PC-3 (cell line): ENCODE measurements at regions of chr6 and their contacts with region 1.

Region 1: GRCh38 chr6:98845211-98846020 is 11.0 kb downstream of the POU3F2 start:
- DNase-seq: peak; percentile 74
- ATAC-seq: peak; percentile 79
- H3K4me3 ChIP-seq: no peak overlapping the region
- H3K27ac ChIP-seq: no peak overlapping the region
- H3K4me1 ChIP-seq: no peaks in the 10 kb centered on the region
- H3K27me3 ChIP-seq: peaks cover 53% of the 10 kb centered on the region
- CTCF ChIP-seq: peak; percentile 81

Region 2: DNA sequence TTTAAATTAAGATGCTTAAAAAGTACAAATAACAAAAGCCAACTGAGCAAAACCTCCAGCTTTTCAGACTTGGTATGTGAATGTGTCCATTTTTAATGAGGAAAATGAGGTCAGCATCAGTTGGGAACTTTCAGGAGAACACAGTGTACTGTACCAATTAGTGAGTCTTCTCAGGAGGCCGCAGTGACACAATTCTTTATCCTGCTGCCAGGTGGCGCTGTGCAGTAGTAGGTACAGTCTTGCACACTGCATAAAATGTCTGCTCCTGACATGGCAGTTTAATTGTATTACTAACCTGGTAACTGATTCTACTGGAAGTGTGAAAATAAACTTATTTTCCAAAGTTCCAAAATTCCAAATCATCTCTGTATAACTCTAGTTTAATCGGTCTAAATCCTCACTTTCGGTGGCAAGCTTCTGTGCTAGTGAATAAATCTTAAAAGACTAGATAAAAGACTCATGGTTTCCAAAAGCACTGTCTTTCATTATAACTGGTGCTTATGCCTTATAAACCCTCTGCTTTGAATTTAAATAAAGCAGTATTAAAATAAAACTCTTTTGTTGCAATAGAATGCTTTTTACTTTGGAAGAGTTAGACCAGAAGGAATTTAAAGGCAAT is 1347.6 kb before region 1 on chr6:
- CTCF ChIA-PET with region 1: interaction called, 4 read pairs
- POLR2A ChIA-PET with region 1: no interaction called
- intact Hi-C with region 1: loop called (anchors 5 kb)
- DNase-seq: peak; percentile 68
- ATAC-seq: peak; percentile 84
- H3K4me3 ChIP-seq: no peak overlapping the region
- H3K27ac ChIP-seq: no peak overlapping the region
- H3K4me1 ChIP-seq: no peaks in the 10 kb centered on the region
- H3K27me3 ChIP-seq: peaks cover 8% of the 10 kb centered on the region; the same call in 1 of the 2 replicates
- CTCF ChIP-seq: peak; percentile 80

Region 3: GRCh38 chr6:98054453-98054852 is 791.0 kb before region 1 on chr6:
- CTCF ChIA-PET with region 1: no interaction called
- POLR2A ChIA-PET with region 1: no interaction called
- intact Hi-C with region 1: loop called (anchors 5 kb)
- DNase-seq: peak; percentile 29
- ATAC-seq: no peak
- H3K4me3 ChIP-seq: no peak overlapping the region
- H3K27ac ChIP-seq: no peak overlapping the region
- H3K4me1 ChIP-seq: no peaks in the 10 kb centered on the region
- H3K27me3 ChIP-seq: peaks cover 49% of the 10 kb centered on the region
- CTCF ChIP-seq: peak; percentile 55

Region 4: GRCh38 chr6:98747273-98747672 is 98.1 kb before region 1 on chr6:
- CTCF ChIA-PET with region 1: no interaction called
- POLR2A ChIA-PET with region 1: no interaction called
- intact Hi-C with region 1: no loop called
- DNase-seq: no peak
- ATAC-seq: no peak
- H3K4me3 ChIP-seq: no peak overlapping the region
- H3K27ac ChIP-seq: no peak overlapping the region
- H3K4me1 ChIP-seq: 0 out of 2 replicates have a peak, but pooled peaks cover 3% of the 10 kb centered on the region
- H3K27me3 ChIP-seq: no peaks in the 10 kb centered on the region
- CTCF ChIP-seq: no peak

Region 5: DNA sequence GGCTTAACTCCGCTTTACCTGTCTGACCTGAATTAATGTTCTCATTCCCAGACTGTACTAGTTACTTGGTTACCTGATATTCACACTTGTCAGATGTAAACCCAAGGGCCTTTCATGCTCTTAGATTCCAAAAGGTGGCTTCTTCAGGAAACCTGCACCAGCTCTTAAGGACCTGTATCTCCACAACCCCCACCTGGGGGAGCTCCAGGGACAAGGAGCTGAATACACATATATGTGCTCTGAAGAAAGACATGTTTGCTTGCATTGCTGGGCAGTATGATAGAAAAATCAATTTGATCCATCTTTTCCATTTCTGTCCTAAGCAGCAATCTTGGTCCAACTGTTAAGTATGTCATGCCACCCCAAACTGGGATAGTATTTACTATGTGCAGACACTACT is 75.9 kb before region 1 on chr6:
- CTCF ChIA-PET with region 1: no interaction called
- POLR2A ChIA-PET with region 1: no interaction called
- intact Hi-C with region 1: loop called (anchors 2 kb)
- DNase-seq: peak; percentile 47
- ATAC-seq: peak; percentile 62
- H3K4me3 ChIP-seq: no peak overlapping the region
- H3K27ac ChIP-seq: no peak overlapping the region
- H3K4me1 ChIP-seq: no peaks in the 10 kb centered on the region
- H3K27me3 ChIP-seq: peaks cover 13% of the 10 kb centered on the region; the same call in 1 of the 2 replicates
- CTCF ChIP-seq: peak; percentile 51; the same call in 1 of the 2 replicates

Region 6: DNA sequence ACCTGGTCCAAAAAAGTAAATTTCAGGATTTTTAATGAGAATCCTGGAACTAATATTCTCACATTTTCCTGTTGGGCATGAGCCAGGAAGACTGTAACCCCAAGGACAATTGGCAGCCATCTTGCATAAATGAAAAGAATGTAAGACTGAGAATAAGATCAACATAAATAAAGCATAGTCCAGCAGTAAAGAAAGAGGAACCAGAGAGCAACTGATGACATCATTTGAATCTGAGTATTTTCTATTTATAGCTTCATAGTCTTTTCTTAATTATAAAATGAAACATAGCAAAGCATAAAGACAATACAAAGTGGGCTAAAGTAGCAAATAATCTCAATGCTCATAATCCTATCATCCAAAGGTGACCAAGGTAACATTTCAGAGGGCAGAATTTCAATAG is 128.9 kb after region 1 on chr6:
- CTCF ChIA-PET with region 1: no interaction called
- POLR2A ChIA-PET with region 1: no interaction called
- intact Hi-C with region 1: no loop called
- DNase-seq: no peak
- ATAC-seq: no peak
- H3K4me3 ChIP-seq: no peak overlapping the region
- H3K27ac ChIP-seq: no peak overlapping the region
- H3K4me1 ChIP-seq: no peaks in the 10 kb centered on the region
- H3K27me3 ChIP-seq: no peaks in the 10 kb centered on the region
- CTCF ChIP-seq: no peak

Region 7: DNA sequence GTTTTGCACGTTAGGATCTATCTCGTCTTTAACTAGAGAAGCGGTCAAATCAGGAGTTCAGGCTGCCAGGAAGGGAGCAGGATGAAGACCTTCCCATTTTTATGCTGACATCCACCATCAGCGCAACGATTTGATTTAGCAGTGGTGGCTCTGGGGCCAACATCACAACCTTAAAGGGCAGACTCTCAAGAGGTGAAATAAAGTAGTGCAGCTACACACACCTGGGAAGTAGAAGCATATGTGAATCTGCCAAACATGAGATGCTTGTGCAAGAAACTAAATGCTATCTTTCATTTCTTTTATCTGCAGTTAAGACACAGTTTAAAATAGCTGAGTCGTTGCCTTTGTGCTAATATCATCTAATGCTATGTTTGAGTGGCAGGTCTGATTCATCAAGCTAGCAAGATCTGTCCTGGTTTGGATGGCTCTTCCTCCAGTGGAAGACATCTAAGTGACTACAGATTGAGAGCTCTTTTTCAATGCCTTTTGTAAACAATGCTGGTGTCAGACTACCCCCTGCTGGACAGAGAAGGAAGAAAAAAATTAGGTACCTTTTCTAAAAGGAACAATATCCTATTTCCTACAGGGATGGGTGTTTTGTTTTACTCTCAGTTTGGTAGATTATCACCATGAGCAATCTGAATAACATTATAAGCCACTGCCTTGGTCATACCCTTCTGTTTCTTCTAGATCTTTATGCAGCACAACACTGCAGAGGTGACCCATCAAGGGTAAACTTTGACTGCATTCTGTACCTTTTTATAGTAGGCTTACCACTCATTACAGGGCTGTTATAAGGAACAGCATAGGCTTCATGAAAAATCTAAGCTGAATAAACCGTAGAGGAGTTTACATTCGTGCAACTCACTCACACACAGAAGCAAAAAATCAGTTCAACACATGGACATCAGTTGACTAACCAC is 274.0 kb after region 1 on chr6:
- CTCF ChIA-PET with region 1: no interaction called
- POLR2A ChIA-PET with region 1: no interaction called
- intact Hi-C with region 1: loop called (anchors 1 kb)
- DNase-seq: peak; percentile 57
- ATAC-seq: peak; percentile 65
- H3K4me3 ChIP-seq: no peak overlapping the region
- H3K27ac ChIP-seq: no peak overlapping the region
- H3K4me1 ChIP-seq: no peaks in the 10 kb centered on the region
- H3K27me3 ChIP-seq: peaks cover 19% of the 10 kb centered on the region
- CTCF ChIP-seq: peak; percentile 70

Region 8: DNA sequence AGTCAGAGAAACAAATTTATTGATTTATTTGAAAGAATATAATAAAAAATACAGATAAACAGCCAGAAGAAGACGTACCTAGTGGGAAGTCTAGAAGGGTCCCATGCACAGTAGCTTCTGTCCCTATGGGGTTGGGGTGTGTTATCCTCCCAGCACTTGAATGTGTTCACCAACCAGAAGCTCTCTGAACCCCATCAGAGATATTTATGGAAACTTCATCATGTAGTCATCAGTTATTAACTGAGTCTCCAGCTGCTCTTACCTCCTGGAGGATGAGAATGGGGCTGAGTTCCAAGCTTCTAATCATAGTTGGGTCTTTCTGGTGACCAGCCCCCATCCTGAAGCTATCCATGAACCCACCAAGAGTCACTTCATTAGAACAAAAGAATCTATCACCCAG is 685.2 kb after region 1 on chr6:
- CTCF ChIA-PET with region 1: no interaction called
- POLR2A ChIA-PET with region 1: no interaction called
- intact Hi-C with region 1: no loop called
- DNase-seq: no peak
- ATAC-seq: no peak
- H3K4me3 ChIP-seq: no peak overlapping the region
- H3K27ac ChIP-seq: no peak overlapping the region
- H3K4me1 ChIP-seq: no peaks in the 10 kb centered on the region
- H3K27me3 ChIP-seq: no peaks in the 10 kb centered on the region
- CTCF ChIP-seq: no peak